Mammary epithelial cell (primary cell): ENCODE measurements at regions of chr4 and their contacts with region 1.

Region 1: DNA sequence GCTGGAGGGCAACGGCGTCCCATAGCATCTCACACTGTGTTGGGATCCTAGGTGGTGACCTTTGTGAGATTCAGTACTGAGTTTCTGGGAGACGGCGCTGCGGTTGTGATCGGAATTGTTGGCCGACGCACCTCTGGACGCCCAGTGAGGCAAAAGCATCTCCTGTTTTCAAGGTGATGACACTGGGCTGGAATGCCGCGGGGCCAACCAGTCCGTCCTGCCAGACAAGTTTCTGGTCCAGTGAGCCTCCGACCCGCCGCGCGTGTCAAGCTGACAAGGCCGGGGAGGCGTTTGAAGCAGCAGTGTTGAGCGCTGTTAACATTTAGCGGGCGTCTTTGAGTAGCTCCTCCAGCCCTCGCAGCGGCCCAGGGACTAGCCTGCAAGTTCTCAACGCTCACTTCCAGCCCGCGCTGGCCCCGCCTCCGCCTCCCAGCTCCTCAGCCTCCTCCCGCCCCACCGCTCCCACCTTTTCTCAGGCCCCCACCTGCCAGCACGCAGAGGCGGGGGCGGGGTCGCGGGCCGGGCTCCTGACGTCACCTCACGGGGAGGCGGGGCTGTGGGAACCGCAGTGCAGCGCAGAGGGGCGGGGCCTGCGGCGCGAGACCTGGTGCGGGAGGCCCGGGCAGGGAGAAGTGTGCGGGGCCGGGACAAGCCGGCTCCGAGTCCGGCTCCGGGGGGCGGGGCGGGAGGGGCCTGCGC is 476 bp upstream of the CDS1 start:
- DNase-seq: peak; percentile 93
- H3K4me3 ChIP-seq: peak overlapping the region; percentile 56 to 78 (median 64)
- H3K27ac ChIP-seq: peak overlapping the region; percentile 90
- H3K4me1 ChIP-seq: peaks cover 32% of the 10 kb centered on the region
- H3K27me3 ChIP-seq: no peaks in the 10 kb centered on the region
- CTCF ChIP-seq: no peak

Region 2: DNA sequence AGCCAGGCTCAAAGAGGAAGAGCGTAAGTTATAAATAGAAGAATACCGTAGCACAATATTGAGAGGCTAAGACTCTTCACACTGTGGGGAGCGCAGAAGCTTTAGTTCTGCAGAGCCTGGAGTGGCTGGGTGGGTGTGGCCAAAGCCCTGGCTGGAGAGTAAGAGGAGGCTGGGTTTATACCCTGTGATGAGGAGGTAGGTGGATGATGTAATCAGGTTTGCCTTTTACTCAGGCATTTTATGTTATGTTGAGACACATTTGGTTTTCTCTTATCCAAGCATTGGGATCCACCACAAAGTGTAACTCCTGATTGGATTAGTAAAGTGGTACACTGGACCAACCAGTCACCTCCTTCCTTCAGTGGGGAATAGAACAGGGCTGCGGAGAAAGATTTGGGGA is 14.4 kb after region 1 on chr4:
- CTCF ChIA-PET with region 1: interaction called, 3 read pairs
- dilution Hi-C with region 1: no loop called
- in situ Hi-C with region 1: no loop called
- intact Hi-C with region 1: loop called (anchors 1 kb)
- DNase-seq: peak; percentile 82
- H3K4me3 ChIP-seq: no peak overlapping the region
- H3K27ac ChIP-seq: peak overlapping the region; percentile 87
- H3K4me1 ChIP-seq: peaks cover 19% of the 10 kb centered on the region
- H3K27me3 ChIP-seq: no peaks in the 10 kb centered on the region
- CTCF ChIP-seq: no peak

Region 3: GRCh38 chr4:84632092-84632491 is 49.6 kb after region 1 on chr4:
- CTCF ChIA-PET with region 1: no interaction called
- dilution Hi-C with region 1: no loop called
- in situ Hi-C with region 1: loop called in 1 of 2 experiments (anchors 10 kb)
- intact Hi-C with region 1: loop called (anchors 1 kb)
- DNase-seq: peak; percentile 79
- H3K4me3 ChIP-seq: peak overlapping the region in 2 of 3 experiments; percentile 15 to 51
- H3K27ac ChIP-seq: peak overlapping the region; percentile 93
- H3K4me1 ChIP-seq: peaks cover 30% of the 10 kb centered on the region
- H3K27me3 ChIP-seq: no peaks in the 10 kb centered on the region
- CTCF ChIP-seq: no peak

Region 4: GRCh38 chr4:84647312-84647884 is 64.9 kb after region 1 on chr4:
- CTCF ChIA-PET with region 1: no interaction called
- dilution Hi-C with region 1: no loop called
- in situ Hi-C with region 1: no loop called
- intact Hi-C with region 1: no loop called
- DNase-seq: no peak
- H3K4me3 ChIP-seq: no peak overlapping the region
- H3K27ac ChIP-seq: no peak overlapping the region
- H3K4me1 ChIP-seq: no peaks in the 10 kb centered on the region
- H3K27me3 ChIP-seq: no peaks in the 10 kb centered on the region
- CTCF ChIP-seq: no peak

Region 5: DNA sequence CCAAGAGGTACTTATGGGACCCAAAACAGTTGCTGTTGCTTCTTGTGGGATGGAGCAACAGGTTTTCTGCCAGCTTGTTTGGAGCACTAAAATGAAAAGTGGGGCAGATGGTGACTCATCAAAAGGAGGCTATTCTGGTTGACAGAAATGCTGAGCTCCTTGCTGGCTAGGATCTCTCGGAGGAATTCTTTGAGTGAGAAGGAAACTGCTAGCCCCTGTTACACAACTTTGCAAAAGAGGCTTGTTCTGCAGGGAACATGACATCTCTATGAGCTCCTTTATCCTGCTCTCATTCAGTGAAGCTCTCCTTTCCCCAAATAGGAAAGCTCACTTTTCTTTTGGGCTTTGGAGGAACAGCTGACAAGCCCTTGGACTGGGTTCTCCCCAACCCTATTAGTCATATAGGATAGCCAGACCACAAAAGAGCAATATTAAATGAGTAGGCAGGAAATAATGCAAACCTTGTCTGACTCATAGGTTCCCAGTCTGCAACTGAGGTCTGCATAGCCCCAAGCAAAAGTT is 108.8 kb after region 1 on chr4:
- CTCF ChIA-PET with region 1: interaction called, 7 read pairs
- dilution Hi-C with region 1: no loop called
- in situ Hi-C with region 1: no loop called
- intact Hi-C with region 1: loop called (anchors 1 kb)
- DNase-seq: peak; percentile 92
- H3K4me3 ChIP-seq: peak overlapping the region in 1 of 3 experiments; percentile 14
- H3K27ac ChIP-seq: peak overlapping the region; percentile 54
- H3K4me1 ChIP-seq: peaks cover 33% of the 10 kb centered on the region
- H3K27me3 ChIP-seq: no peaks in the 10 kb centered on the region
- CTCF ChIP-seq: no peak

Region 6: GRCh38 chr4:84726356-84726755 is 143.9 kb after region 1 on chr4:
- CTCF ChIA-PET with region 1: interaction called, 10 read pairs
- dilution Hi-C with region 1: no loop called
- in situ Hi-C with region 1: no loop called
- intact Hi-C with region 1: no loop called
- DNase-seq: no peak
- H3K4me3 ChIP-seq: no peak overlapping the region
- H3K27ac ChIP-seq: no peak overlapping the region
- H3K4me1 ChIP-seq: no peaks in the 10 kb centered on the region
- H3K27me3 ChIP-seq: no peaks in the 10 kb centered on the region
- CTCF ChIP-seq: no peak

Region 7: DNA sequence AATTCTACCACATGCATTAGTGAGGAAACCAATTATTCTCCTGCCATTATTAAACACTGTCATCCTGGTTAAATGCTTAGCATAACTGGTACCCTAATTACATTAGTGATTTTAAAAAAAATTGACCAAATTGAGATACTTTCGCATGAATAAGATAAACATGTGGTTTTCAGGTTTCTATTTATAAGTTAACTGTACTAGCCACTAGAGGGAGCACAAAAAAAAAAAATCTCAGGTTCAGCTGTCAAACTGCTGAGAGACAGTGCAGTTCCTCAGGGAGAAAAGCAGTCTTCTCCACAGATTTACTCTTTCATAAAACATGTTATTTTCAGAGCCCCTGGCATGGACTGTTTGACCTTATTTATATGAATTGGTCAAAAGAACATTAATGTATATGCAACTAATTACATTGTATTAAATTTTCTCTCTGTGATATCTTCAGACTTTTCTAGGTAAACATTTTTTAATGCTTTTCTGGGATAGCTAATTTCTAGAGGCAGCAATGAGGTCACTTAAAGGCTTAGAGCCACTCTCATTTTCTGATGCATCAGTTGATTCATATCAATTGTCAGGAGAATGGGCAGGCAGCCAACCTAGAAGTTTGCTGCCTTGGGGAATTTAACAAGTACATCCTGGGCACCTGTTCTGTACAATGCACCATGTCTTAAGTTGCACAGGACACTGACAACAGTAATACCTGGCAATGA is 168.0 kb after region 1 on chr4:
- CTCF ChIA-PET with region 1: no interaction called
- dilution Hi-C with region 1: no loop called
- in situ Hi-C with region 1: no loop called
- intact Hi-C with region 1: loop called (anchors 2 kb)
- DNase-seq: peak; percentile 17
- H3K4me3 ChIP-seq: no peak overlapping the region
- H3K27ac ChIP-seq: no peak overlapping the region
- H3K4me1 ChIP-seq: no peaks in the 10 kb centered on the region
- H3K27me3 ChIP-seq: no peaks in the 10 kb centered on the region
- CTCF ChIP-seq: peak; percentile 31 to 59

Region 8: GRCh38 chr4:84778041-84778440 is 195.6 kb after region 1 on chr4:
- CTCF ChIA-PET with region 1: no interaction called
- dilution Hi-C with region 1: no loop called
- in situ Hi-C with region 1: no loop called
- intact Hi-C with region 1: no loop called
- DNase-seq: no peak
- H3K4me3 ChIP-seq: no peak overlapping the region
- H3K27ac ChIP-seq: no peak overlapping the region
- H3K4me1 ChIP-seq: no peaks in the 10 kb centered on the region
- H3K27me3 ChIP-seq: no peaks in the 10 kb centered on the region
- CTCF ChIP-seq: no peak